GM10248 (cell line): ENCODE measurements at regions of chr5 and their contacts with region 1.

Region 1: DNA sequence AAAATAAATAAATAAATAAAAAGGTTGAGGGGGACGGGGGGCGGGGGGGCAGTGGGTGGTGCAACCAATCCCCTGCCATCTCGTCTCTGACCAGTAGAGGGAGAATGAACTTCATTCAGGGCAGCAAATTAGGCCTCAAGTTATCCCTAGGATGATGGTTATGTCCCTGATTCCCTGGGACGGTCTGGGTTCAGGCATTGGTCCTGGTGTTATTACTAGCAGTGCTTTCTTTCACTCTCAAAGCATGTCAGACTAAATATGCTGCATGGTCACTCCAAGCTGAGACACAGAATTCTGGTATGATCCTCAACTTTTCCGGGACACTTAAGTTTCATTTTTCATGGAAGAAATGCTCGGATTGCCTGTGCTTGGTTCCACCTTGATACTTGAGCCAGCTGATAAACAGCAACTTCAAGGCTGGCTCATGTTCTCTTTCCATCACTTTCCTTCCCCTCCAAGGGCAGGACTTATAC is 59.4 kb downstream of the DAP start:
- DNase-seq: no peak
- CTCF ChIP-seq: peak; percentile 43

Region 2: DNA sequence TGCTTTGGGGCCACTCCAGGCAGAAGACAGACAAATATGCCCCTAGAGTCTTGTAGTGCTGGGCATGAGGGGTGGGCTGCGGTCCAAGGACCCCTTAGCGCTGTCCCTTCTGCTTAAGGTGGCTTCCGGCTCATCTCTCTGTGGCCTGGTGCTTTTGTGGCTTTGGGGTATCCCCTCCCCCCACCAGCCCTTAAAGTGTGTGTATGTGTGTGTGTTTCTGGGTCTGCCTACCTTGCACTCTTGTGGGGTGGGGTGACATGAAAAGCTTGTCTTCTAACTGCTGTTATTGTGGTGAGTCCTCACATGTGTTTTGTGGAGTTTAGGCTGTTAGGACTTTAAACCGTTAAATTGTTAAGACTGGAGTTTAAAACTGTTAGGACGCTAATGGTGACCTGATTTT is 324.5 kb before region 1 on chr5:
- CTCF ChIA-PET with region 1: no interaction called
- POLR2A ChIA-PET with region 1: no interaction called
- DNase-seq: no peak
- CTCF ChIP-seq: no peak

Region 3: DNA sequence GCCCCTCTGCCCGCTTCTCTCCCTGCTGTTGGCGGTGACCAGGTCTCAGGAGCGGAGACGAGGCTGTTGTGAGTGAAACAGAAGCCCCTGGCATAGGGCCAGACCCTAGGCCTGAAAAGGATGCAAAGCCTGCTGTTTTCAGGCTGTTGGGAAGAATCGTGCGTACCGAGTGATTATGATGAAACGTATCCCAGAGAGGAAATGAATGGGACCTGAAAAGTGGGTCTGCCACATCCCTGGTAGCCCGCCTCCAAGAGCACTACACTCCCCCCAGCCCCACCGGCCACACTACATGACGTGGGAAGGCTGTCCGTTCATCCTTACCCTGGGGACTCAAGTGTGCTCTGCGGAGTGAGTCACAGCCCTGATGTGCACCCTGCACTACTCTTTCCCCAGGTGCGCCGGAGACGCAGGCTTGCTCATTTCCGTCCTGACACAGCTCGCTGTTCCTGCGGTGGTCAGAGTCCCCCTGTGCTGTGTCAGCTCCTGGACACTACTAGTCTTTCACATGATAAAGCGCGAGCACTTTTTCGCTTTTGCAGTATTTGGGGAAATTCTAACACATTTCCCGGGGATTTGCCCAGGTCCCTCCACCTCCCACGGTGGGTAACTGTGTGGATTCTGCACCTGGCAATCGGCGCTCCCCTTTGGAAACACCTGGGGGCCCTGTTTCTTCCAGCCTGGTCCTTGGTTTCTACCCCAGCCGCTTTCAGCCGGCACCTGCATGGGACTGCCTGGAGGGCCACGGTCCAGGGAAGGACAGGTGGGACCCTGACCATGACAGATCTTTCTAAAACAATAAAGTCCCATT is 46.2 kb before region 1 on chr5:
- CTCF ChIA-PET with region 1: no interaction called
- POLR2A ChIA-PET with region 1: no interaction called
- DNase-seq: no peak
- CTCF ChIP-seq: no peak

Region 4: GRCh38 chr5:10684303-10685086 is 17.1 kb before region 1 on chr5:
- CTCF ChIA-PET with region 1: interaction called, 57 read pairs
- POLR2A ChIA-PET with region 1: no interaction called
- DNase-seq: peak; percentile 56
- CTCF ChIP-seq: no peak

Region 5: DNA sequence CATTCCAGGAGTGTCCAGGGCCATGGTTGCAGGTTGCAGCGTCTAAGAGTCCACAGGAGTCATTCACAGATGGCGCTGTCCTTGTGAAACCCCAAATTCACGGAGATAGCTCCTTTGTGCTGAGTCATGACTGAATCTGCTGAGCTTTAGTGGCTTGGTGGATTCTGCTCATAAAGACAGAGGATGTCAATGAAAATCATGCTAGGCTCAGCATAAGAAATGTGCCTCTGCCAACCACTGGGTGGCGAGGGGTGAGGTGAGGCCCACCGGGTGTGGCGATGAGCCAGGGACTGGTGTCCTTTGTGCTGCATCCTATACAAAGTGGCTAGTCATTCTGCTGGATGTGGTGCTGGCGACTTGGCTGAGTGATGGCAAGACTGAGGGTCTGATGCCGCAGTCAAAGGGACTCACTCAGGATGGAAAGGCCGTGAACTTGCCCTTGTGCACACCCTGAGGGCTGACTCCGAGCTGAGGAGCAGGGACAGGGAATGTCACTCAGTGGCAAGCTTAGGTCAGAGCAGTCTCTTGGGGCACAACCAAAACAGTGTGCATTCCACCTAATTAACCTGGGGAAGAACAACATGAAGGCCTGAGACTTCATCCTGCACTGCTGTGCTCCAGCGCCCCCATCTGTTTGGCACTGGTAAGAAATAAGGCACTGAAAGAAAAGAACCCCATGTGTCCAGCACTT is 12.1 kb before region 1 on chr5:
- CTCF ChIA-PET with region 1: interaction called, 57 read pairs
- POLR2A ChIA-PET with region 1: no interaction called
- DNase-seq: no peak
- CTCF ChIP-seq: peak; percentile 26

Region 6: GRCh38 chr5:10712574-10713517 is 11.2 kb after region 1 on chr5:
- CTCF ChIA-PET with region 1: interaction called, 10 read pairs
- POLR2A ChIA-PET with region 1: interaction called, 8 read pairs
- DNase-seq: no peak
- CTCF ChIP-seq: no peak

Region 7: DNA sequence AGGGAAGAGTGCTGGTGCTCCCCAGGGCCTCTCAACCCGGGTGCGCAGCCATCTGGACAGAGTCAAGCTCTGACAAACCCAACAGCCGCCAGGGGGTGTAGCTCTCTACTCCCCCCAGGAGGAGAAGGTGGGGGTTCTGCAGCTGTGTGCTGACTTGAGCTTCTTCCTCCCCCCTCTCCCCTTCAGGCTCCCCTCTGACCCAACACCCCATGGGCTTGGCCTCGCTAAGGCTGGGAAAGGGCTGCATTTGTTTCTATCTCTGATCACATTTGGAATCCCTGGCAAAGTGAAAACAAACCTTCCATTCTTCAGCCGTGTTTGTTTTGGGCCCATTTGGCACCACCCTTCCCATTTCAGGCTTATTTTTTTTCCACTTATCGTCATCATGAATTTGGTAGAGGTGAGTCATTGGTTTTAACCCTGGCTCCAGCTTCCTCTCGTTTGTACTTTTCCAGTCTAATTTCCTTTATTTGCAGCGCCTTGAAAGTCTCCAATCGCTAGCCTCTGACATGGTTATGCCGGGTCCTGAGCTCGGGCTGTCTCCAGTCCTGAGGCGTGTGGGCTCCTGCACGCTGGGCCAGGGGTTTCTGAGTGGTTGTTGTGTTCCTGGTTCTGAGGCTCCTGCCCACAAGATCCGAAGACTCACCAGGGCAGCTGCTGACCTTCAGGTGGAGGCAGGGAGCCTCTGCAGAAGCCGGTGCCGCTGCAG is 23.4 kb after region 1 on chr5:
- CTCF ChIA-PET with region 1: interaction called, 22 read pairs
- POLR2A ChIA-PET with region 1: interaction called, 9 read pairs
- DNase-seq: no peak
- CTCF ChIP-seq: no peak